ENCODE measurements at regions of chr10 and their contacts with region 1.

Region 1: GRCh38 chr10:71696628-71697326 is 22.8 kb downstream of the C10orf105 start:
- DNase-seq: peak; percentile 74
- H3K27ac ChIP-seq: no peak overlapping the region
- CTCF ChIP-seq: peak; percentile 84

Region 2: GRCh38 chr10:71383972-71384687 is 312.6 kb before region 1 on chr10:
- CTCF ChIA-PET with region 1: interaction called, 10 read pairs
- POLR2A ChIA-PET with region 1: no interaction called
- DNase-seq: peak; percentile 82
- H3K27ac ChIP-seq: no peak overlapping the region
- CTCF ChIP-seq: peak; percentile 92

Region 3: GRCh38 chr10:71708301-71708703 is 11.5 kb after region 1 on chr10:
- CTCF ChIA-PET with region 1: interaction called, 23 read pairs
- POLR2A ChIA-PET with region 1: no interaction called
- DNase-seq: peak; percentile 37
- H3K27ac ChIP-seq: no peak overlapping the region
- CTCF ChIP-seq: peak; percentile 63

Region 4: DNA sequence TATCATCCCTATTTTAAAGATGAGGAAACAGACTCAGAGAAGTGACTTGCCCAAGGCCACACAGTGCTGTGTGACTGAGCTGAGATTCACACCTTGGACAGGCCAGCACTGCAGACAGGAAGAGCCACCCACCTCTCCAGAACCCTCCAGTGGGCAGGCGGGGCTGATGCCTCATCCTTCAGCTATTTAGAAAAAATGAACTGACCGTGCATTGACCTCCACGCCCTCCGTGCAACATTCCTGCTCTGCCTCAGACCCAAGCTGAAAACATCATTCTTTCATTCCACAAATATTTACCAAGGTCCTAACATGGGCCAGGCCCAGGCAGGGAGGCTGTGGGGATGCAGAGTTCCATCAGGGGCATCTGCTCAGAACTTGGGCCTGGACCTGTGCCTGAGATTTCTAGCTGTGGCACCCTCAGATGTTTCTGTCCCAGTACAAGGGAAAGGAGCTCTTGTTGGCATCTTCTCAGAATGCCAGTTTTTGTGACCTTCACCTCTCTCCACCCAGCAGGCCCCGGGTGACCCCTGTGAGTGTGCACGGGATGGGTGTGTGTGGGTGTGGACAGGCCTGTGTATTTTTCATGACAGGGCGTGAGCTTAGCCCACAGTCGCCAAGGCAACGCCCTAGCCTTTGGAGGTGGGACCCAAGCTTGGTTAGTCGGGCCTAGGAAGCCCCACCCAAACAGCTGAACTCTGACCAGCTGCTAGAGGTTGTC is 70.1 kb after region 1 on chr10:
- CTCF ChIA-PET with region 1: interaction called, 11 read pairs
- POLR2A ChIA-PET with region 1: no interaction called
- DNase-seq: peak; percentile 94
- H3K27ac ChIP-seq: peak overlapping the region; percentile 98
- CTCF ChIP-seq: no peak